ENCODE measurements at regions of chr22 and their contacts with region 1.

Region 1: GRCh38 chr22:38696606-38697424 is 3.9 kb downstream of the JOSD1 start:
- DNase-seq: no peak
- CTCF ChIP-seq: no peak

Region 2: GRCh38 chr22:38681784-38682335 is 15.0 kb before region 1 on chr22 and contains the start of gene TOMM22:
- CTCF ChIA-PET with region 1: interaction called, 48 read pairs
- POLR2A ChIA-PET with region 1: interaction called, 12 read pairs
- DNase-seq: peak; percentile 98
- CTCF ChIP-seq: peak; percentile 78